ENCODE measurements at regions of chr2 and their contacts with region 1.

Region 1: DNA sequence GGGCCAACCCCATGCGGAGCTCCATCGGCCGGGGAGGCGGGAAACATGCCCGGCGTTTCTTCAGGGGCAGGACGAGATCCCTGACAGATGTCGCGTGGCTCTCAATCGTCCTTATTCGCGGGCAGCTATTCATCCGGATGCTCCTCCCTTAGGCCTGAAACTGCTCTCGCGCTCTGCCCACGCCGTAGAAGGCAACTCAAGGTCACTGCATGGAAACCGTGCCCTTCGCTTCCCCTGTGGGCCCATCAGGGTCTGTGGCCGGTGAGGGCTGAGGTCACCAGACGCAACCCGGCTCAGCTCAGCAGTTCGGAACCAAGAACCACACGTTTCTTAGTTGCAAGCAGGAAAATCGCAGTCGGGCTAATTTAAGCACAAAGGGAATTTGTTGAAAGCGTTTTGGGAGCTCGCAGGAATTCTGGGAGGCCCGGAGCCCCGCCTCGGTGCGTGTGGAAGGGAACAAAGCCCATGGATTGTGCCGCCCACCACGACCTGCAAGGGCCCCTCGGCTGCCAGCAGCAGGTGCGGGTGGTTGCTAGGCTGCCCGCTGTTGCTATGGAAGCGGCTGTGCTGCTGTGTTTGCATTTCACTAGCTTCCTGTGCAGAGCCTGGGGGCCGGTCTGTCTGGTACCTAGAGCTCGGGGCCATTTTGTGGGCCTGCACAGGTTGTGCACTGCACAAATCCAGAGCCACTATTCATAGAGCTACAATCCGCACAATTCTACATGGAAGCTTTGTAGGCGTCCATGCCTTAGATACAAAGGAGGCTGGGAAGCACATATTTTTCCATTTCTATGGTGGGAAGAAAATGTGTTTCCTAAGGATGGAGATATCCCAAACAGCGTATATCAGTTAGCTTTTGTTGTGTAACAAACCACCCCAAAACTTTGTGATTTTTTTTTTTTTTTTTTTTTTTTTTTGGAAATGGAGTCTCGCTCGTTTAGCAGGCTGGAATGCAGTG is 6.0 kb upstream of the ALLC start:
- DNase-seq: peak; percentile 49
- ATAC-seq: peak; percentile 70
- H3K4me3 Mint-ChIP-seq: peak overlapping the region; percentile 81
- H3K27ac Mint-ChIP-seq: peak overlapping the region; percentile 78
- H3K4me1 Mint-ChIP-seq: peaks cover 18% of the 10 kb centered on the region
- H3K27me3 Mint-ChIP-seq: peaks cover 3% of the 10 kb centered on the region
- CTCF ChIP-seq: no peak

Region 2: DNA sequence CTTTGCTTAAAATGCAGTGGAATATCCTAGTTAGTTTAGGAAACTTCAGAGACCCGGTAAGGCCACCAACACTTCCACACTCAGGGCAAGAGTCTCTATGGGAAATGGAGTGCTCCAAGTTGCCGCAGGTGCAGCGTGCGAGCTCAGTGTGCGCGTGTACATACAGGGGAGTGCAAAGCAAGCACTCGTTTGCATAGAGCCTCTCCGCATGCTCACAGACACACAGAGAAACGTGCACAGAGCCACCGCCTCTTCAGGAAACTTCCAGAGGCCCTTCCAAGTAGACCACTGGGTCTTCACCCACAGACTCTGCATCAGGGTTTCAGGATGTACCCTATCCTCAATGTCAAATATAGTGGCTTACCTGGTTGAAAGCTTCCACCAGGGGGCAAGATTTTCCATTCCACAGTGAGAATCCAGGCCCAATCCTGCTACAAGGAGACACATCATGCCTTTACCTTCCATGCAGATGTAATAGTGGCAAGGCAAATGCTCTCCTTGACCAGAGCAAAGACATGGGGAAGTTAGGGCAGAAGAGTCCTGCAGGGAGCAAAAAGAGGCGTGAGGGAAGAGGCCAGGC is 807.9 kb before region 1 on chr2:
- CTCF ChIA-PET with region 1: no interaction called
- POLR2A ChIA-PET with region 1: no interaction called
- intact Hi-C with region 1: loop called (anchors 2 kb)
- DNase-seq: no peak
- ATAC-seq: no peak
- H3K4me3 Mint-ChIP-seq: no peak overlapping the region
- H3K27ac Mint-ChIP-seq: no peak overlapping the region
- H3K4me1 Mint-ChIP-seq: no peaks in the 10 kb centered on the region
- H3K27me3 Mint-ChIP-seq: no peaks in the 10 kb centered on the region
- CTCF ChIP-seq: no peak

Region 3: GRCh38 chr2:3265981-3266924 is 385.7 kb before region 1 on chr2:
- CTCF ChIA-PET with region 1: no interaction called
- POLR2A ChIA-PET with region 1: no interaction called
- intact Hi-C with region 1: no loop called
- DNase-seq: no peak
- ATAC-seq: no peak
- H3K4me3 Mint-ChIP-seq: no peak overlapping the region
- H3K27ac Mint-ChIP-seq: no peak overlapping the region
- H3K4me1 Mint-ChIP-seq: peaks cover 2% of the 10 kb centered on the region
- H3K27me3 Mint-ChIP-seq: no peaks in the 10 kb centered on the region
- CTCF ChIP-seq: no peak

Region 4: GRCh38 chr2:3303583-3304406 is 348.2 kb before region 1 on chr2:
- CTCF ChIA-PET with region 1: no interaction called
- POLR2A ChIA-PET with region 1: no interaction called
- intact Hi-C with region 1: loop called (anchors 1 kb)
- DNase-seq: peak; percentile 68
- ATAC-seq: peak; percentile 95
- H3K4me3 Mint-ChIP-seq: peak overlapping the region; percentile 45
- H3K27ac Mint-ChIP-seq: peak overlapping the region; percentile 7
- H3K4me1 Mint-ChIP-seq: peaks cover 16% of the 10 kb centered on the region
- H3K27me3 Mint-ChIP-seq: no peaks in the 10 kb centered on the region
- CTCF ChIP-seq: no peak

Region 5: DNA sequence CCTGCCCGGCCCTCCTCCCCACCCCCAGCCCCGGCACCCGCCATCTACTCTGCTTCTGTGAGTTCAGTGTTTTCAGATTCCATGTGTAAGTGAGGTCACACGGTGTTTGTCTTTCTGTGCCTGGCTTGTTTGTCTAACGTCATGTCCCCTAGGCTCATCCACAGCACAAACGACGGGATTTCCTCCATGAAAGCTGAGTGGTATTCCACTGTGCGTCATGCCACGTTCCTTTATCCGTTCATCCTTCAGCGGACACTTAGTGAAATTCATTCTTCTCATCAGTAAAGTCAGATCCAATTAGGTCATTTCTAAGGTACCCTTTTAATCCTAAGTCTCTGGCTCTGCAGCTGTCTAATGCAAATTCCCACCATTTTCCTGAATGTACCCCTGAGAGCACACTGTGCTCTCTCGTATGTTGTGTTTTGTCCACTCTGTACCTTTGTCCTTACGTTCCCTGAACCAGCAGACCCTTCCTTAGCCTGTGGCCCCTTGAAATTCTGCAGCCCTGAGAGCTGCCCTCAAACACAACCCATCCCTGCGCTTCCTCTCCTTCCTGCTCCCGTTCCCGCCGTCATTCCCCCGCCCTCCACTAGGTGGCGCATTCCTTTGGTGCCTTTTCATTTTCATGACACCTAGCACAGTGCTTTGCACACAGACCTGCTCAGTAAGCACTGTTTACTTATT is 228.3 kb before region 1 on chr2:
- CTCF ChIA-PET with region 1: interaction called, 52 read pairs
- POLR2A ChIA-PET with region 1: no interaction called
- intact Hi-C with region 1: no loop called
- DNase-seq: peak; percentile 64
- ATAC-seq: peak; percentile 75
- H3K4me3 Mint-ChIP-seq: no peak overlapping the region
- H3K27ac Mint-ChIP-seq: no peak overlapping the region
- H3K4me1 Mint-ChIP-seq: peaks cover 16% of the 10 kb centered on the region
- H3K27me3 Mint-ChIP-seq: no peaks in the 10 kb centered on the region
- CTCF ChIP-seq: peak; percentile 78

Region 6: GRCh38 chr2:3518496-3519254 is 133.3 kb before region 1 on chr2:
- CTCF ChIA-PET with region 1: no interaction called
- POLR2A ChIA-PET with region 1: interaction called, 5 read pairs
- intact Hi-C with region 1: loop called (anchors 1 kb)
- DNase-seq: peak; percentile 98
- ATAC-seq: peak; percentile 76
- H3K4me3 Mint-ChIP-seq: peak overlapping the region; percentile 85
- H3K27ac Mint-ChIP-seq: peak overlapping the region; percentile 91
- H3K4me1 Mint-ChIP-seq: peaks cover 38% of the 10 kb centered on the region
- H3K27me3 Mint-ChIP-seq: no peaks in the 10 kb centered on the region
- CTCF ChIP-seq: no peak

Region 7: DNA sequence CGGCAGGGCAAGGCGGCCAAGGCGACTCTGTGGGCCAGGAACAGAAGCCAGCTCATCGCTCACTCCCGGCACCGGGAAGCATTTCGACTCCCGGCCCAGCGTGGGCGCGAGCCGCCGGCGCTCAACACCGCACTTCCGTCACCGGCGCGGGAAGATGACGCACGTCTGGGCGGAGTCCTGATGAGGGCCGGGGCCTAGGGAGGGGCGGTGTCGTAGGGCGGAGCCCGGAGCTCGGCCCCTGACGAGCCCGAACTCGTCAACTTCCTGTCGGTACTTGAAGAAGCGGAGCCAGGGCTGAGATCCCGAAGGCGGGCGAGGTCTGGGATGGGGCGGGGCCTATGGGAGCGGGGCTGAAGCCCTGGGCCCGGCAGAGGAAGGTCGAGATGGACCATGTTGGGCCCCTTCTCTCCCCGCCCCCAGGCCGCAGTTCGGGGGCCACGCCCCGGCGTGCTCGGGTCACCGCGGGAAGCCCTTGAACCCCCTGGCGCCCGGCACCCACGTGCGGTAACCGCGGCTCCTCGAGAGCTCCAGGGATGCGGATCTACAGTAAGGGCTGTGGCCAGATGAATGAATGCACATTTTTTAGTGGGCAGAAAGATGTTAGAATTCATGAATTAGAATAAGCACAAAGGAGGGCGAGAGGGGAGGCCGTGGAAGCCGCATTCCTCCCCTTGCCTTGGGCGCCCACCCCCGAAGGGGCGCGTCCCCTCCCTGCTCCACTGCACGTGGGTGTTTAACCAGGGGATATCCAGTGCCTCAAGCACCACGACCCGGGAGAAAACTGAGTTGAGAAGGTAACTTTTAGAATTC is 93.6 kb before region 1 on chr2 and contains the start of gene RNASEH1:
- CTCF ChIA-PET with region 1: no interaction called
- POLR2A ChIA-PET with region 1: interaction called, 11 read pairs
- intact Hi-C with region 1: loop called (anchors 1 kb)
- DNase-seq: peak; percentile 99
- ATAC-seq: peak; percentile 95
- H3K4me3 Mint-ChIP-seq: peak within 1 kb of the TSS; percentile 91
- H3K27ac Mint-ChIP-seq: peak within 1 kb of the TSS; percentile 97
- H3K4me1 Mint-ChIP-seq: peaks cover 45% of the 10 kb centered on the region
- H3K27me3 Mint-ChIP-seq: no peaks in the 10 kb centered on the region
- CTCF ChIP-seq: no peak
- total RNA-seq, gene RNASEH1: 27.4 and 28.5 TPM in 2 replicates

Region 8: GRCh38 chr2:4618141-4618540 is 966.2 kb after region 1 on chr2:
- CTCF ChIA-PET with region 1: no interaction called
- POLR2A ChIA-PET with region 1: no interaction called
- intact Hi-C with region 1: no loop called
- DNase-seq: no peak
- ATAC-seq: no peak
- H3K4me3 Mint-ChIP-seq: no peak overlapping the region
- H3K27ac Mint-ChIP-seq: no peak overlapping the region
- H3K4me1 Mint-ChIP-seq: no peaks in the 10 kb centered on the region
- H3K27me3 Mint-ChIP-seq: no peaks in the 10 kb centered on the region
- CTCF ChIP-seq: no peak

Measured in activated B cell treated with CpG ODN at 0.5 μM for 24 hours (primary cell).